ENCODE measurements at regions of chr7 and their contacts with region 1.

Region 1: GRCh38 chr7:151226875-151227782 is at the start of gene ABCF2:
- DNase-seq: peak; percentile 99
- H3K4me3 Mint-ChIP-seq: peak within 1 kb of the TSS; percentile 99
- H3K27ac Mint-ChIP-seq: peak within 1 kb of the TSS; percentile 89
- H3K4me1 Mint-ChIP-seq: peaks cover 47% of the 10 kb centered on the region
- H3K27me3 Mint-ChIP-seq: no peaks in the 10 kb centered on the region
- total RNA-seq, gene ABCF2: 41.1 to 41.2 TPM

Region 2: GRCh38 chr7:151017953-151018420 is 209.1 kb before region 1 on chr7:
- CTCF ChIA-PET with region 1: no interaction called
- POLR2A ChIA-PET with region 1: no interaction called
- intact Hi-C with region 1: loop called (anchors 2 kb)
- DNase-seq: peak; percentile 86
- H3K4me3 Mint-ChIP-seq: peak overlapping the region; percentile 63
- H3K27ac Mint-ChIP-seq: no peak overlapping the region
- H3K4me1 Mint-ChIP-seq: peaks cover 47% of the 10 kb centered on the region
- H3K27me3 Mint-ChIP-seq: peaks cover 11% of the 10 kb centered on the region

Region 3: GRCh38 chr7:151080522-151081169 is 146.5 kb before region 1 on chr7 and contains the start of gene FASTK:
- CTCF ChIA-PET with region 1: no interaction called
- POLR2A ChIA-PET with region 1: no interaction called
- intact Hi-C with region 1: loop called (anchors 1 kb)
- DNase-seq: peak; percentile 93
- H3K4me3 Mint-ChIP-seq: peak within 1 kb of the TSS; percentile 98
- H3K27ac Mint-ChIP-seq: peak within 1 kb of the TSS; percentile 86
- H3K4me1 Mint-ChIP-seq: peaks cover 35% of the 10 kb centered on the region
- H3K27me3 Mint-ChIP-seq: peaks cover 5% of the 10 kb centered on the region
- total RNA-seq, gene FASTK: 56.8 to 57.4 TPM

Region 4: GRCh38 chr7:151210087-151210854 is 16.9 kb before region 1 on chr7 and contains the start of gene H2BK1:
- CTCF ChIA-PET with region 1: no interaction called
- POLR2A ChIA-PET with region 1: no interaction called
- intact Hi-C with region 1: no loop called
- DNase-seq: no peak
- H3K4me3 Mint-ChIP-seq: no peak within 1 kb of the TSS
- H3K27ac Mint-ChIP-seq: no peak within 1 kb of the TSS
- H3K4me1 Mint-ChIP-seq: peaks cover 26% of the 10 kb centered on the region
- H3K27me3 Mint-ChIP-seq: no peaks in the 10 kb centered on the region
- total RNA-seq, gene H2BK1: not detected

Region 5: DNA sequence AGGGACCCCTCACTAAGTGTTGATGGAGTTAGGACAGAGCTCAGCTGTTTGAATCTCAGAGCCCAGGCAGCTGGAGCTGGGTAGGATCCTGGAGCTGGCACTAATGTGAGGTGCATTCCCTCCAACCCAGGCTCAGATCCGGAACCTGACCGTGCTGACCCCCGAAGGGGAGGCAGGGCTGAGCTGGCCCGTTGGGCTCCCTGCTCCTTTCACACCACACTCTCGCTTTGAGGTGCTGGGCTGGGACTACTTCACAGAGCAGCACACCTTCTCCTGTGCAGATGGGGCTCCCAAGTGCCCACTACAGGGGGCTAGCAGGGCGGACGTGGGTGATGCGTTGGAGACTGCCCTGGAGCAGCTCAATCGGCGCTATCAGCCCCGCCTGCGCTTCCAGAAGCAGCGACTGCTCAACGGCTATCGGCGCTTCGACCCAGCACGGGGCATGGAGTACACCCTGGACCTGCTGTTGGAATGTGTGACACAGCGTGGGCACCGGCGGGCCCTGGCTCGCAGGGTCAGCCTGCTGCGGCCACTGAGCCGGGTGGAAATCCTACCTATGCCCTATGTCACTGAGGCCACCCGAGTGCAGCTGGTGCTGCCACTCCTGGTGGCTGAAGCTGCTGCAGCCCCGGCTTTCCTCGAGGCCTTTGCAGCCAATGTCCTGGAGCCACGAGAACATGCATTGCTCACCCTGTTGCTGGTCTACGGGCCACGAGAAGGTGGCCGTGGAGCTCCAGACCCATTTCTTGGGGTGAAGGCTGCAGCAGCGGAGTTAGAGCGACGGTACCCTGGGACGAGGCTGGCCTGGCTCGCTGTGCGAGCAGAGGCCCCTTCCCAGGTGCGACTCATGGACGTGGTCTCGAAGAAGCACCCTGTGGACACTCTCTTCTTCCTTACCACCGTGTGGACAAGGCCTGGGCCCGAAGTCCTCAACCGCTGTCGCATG is 10.4 kb after region 1 on chr7:
- CTCF ChIA-PET with region 1: interaction called, 62 read pairs
- POLR2A ChIA-PET with region 1: interaction called, 19 read pairs
- intact Hi-C with region 1: no loop called
- DNase-seq: no peak
- H3K4me3 Mint-ChIP-seq: no peak overlapping the region
- H3K27ac Mint-ChIP-seq: no peak overlapping the region
- H3K4me1 Mint-ChIP-seq: peaks cover 17% of the 10 kb centered on the region
- H3K27me3 Mint-ChIP-seq: no peaks in the 10 kb centered on the region

Region 6: GRCh38 chr7:151519765-151520418 is 292.8 kb after region 1 on chr7 and contains the start of gene RHEB:
- CTCF ChIA-PET with region 1: no interaction called
- POLR2A ChIA-PET with region 1: no interaction called
- intact Hi-C with region 1: loop called (anchors 5 kb)
- DNase-seq: peak; percentile 99
- H3K4me3 Mint-ChIP-seq: peak within 1 kb of the TSS; percentile 92
- H3K27ac Mint-ChIP-seq: peak within 1 kb of the TSS; percentile 96
- H3K4me1 Mint-ChIP-seq: peaks cover 35% of the 10 kb centered on the region
- H3K27me3 Mint-ChIP-seq: no peaks in the 10 kb centered on the region
- total RNA-seq, gene RHEB: 62.0 to 64.6 TPM